WTC11 (cell line): ENCODE measurements at regions of chr17 and their contacts with region 1.

Region 1: DNA sequence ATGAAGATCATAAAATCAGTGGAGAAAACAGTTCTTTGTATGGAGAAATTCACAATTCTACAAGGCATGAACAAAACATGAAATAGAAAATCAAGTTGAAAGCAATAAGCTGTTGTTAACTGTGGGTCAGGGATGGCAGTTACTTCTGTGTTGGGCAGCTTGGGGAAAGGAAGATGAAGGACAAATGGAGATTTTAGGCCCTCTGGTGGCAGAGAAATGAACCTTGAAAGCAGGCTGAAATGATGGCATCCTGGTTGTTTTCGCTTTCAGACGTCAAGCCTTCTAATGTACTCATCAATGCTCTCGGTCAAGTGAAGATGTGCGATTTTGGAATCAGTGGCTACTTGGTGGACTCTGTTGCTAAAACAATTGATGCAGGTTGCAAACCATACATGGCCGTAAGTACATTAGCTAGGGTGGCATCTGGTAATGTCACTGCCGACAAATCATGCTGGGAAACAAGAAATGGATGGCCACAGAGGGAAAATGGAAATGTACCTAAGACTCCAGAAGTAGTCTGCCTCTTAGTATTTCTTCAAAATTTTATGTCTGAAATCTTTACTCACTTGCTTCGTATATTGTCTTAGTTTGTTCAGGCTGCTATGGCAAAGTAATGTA is 108.9 kb downstream of the MAP2K6 start:
- DNase-seq: no peak
- ATAC-seq: peak; percentile 81
- H3K4me3 Mint-ChIP-seq: no peak overlapping the region
- H3K27ac Mint-ChIP-seq: peak overlapping the region; percentile 47
- H3K4me1 Mint-ChIP-seq: peaks cover 7% of the 10 kb centered on the region
- H3K27me3 Mint-ChIP-seq: no peaks in the 10 kb centered on the region
- CTCF ChIP-seq: peak; percentile 48

Region 2: DNA sequence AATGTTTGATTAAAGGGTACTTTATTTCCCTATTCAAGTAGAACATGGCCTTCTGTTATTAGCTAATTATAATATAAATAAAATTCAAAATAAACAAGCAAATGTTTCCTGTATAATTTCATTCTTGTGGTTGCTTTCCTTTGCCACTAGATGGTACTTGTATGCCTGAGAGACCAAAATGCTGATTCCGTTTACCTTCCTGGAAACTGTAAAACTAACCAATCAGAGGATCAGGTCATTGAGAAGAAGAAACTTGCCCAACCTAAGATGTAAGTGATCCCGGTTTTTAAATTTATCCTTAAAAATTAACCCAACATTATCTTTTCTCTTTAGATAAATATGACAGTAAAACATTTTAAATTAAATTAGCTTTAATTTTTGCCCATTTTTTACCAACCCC is 188.3 kb before region 1 on chr17:
- CTCF ChIA-PET with region 1: interaction called, 10 read pairs
- POLR2A ChIA-PET with region 1: no interaction called
- DNase-seq: no peak
- ATAC-seq: peak; percentile 79
- H3K4me3 Mint-ChIP-seq: no peak overlapping the region
- H3K27ac Mint-ChIP-seq: no peak overlapping the region
- H3K4me1 Mint-ChIP-seq: peaks cover 10% of the 10 kb centered on the region
- H3K27me3 Mint-ChIP-seq: no peaks in the 10 kb centered on the region
- CTCF ChIP-seq: no peak

Region 3: DNA sequence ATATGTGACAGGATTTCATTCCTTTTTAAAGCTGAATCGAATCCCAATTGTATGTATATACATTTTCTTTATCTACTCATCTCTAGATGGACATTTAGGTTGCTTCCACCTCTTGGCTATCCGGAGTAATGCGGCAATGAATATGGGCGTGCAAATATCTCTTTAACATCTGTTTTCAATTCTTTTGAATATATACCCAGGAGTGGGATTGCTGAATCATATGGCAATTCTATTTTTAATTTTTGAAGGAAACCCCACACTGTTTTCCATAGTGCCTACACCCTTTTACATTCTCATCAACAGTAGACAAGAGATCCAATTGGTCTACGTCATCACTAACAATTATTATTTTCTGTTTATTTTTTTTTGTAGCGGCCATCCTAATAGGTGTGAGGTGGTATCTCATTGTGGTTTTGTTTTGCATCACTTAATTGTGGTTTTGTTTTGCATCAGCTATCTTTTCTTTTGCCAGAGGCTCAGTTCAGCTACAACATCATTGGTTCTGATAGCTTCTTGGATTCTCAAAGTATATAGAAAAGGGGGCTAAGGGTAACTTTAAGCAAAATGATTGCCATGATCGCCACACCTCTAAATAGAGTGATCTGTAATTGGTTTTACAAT is 134.4 kb before region 1 on chr17:
- CTCF ChIA-PET with region 1: interaction called, 22 read pairs
- POLR2A ChIA-PET with region 1: no interaction called
- DNase-seq: no peak
- ATAC-seq: no peak
- H3K4me3 Mint-ChIP-seq: no peak overlapping the region
- H3K27ac Mint-ChIP-seq: no peak overlapping the region
- H3K4me1 Mint-ChIP-seq: no peaks in the 10 kb centered on the region
- H3K27me3 Mint-ChIP-seq: no peaks in the 10 kb centered on the region
- CTCF ChIP-seq: no peak

Region 4: DNA sequence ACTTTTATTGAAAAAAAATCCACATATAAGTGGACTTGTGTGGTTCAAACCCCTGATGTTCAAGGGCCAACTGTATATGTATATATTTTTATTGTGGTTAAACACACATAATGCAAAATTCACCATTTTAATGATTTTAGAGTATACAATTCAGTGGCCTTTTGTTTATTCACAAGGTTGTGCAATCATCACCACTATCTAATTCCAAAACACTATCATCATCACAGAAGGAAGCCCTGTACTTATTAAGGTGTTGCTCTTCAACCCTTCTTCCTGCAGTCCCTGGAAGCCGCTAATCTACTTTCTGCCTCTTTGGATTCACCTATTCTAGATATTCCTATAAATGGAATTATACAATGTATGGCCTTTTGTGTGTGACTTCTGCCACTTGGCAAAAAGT is 85.9 kb before region 1 on chr17:
- CTCF ChIA-PET with region 1: no interaction called
- POLR2A ChIA-PET with region 1: no interaction called
- DNase-seq: no peak
- ATAC-seq: no peak
- H3K4me3 Mint-ChIP-seq: no peak overlapping the region
- H3K27ac Mint-ChIP-seq: no peak overlapping the region
- H3K4me1 Mint-ChIP-seq: peaks cover 46% of the 10 kb centered on the region
- H3K27me3 Mint-ChIP-seq: no peaks in the 10 kb centered on the region
- CTCF ChIP-seq: no peak

Region 5: GRCh38 chr17:69473841-69474831 is 49.2 kb before region 1 on chr17:
- CTCF ChIA-PET with region 1: no interaction called
- POLR2A ChIA-PET with region 1: no interaction called
- DNase-seq: no peak
- ATAC-seq: no peak
- H3K4me3 Mint-ChIP-seq: no peak overlapping the region
- H3K27ac Mint-ChIP-seq: no peak overlapping the region
- H3K4me1 Mint-ChIP-seq: peaks cover 15% of the 10 kb centered on the region
- H3K27me3 Mint-ChIP-seq: no peaks in the 10 kb centered on the region
- CTCF ChIP-seq: no peak

Region 6: DNA sequence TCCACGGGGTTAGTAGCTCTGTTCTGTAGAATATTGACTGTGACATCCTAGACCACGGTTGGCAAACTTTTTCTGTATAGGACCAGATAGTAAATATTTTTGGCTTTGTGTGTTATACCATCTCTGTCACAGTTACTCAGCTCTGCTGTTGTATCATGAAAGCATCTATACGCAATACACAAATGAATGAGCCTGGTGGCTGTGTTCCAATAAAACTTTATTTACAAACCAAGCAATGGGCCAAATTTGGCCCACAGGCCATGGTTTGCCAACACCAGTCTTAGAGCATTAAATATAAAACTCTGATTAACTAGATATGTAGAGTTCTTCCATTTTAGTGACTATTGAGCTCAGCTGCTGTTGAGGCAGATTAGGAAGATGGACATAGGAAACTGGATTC is 23.9 kb after region 1 on chr17:
- CTCF ChIA-PET with region 1: interaction called, 11 read pairs
- POLR2A ChIA-PET with region 1: no interaction called
- DNase-seq: no peak
- ATAC-seq: no peak
- H3K4me3 Mint-ChIP-seq: no peak overlapping the region
- H3K27ac Mint-ChIP-seq: no peak overlapping the region
- H3K4me1 Mint-ChIP-seq: peaks cover 24% of the 10 kb centered on the region
- H3K27me3 Mint-ChIP-seq: no peaks in the 10 kb centered on the region
- CTCF ChIP-seq: no peak

Region 7: GRCh38 chr17:69560987-69561441 is 37.7 kb after region 1 on chr17:
- CTCF ChIA-PET with region 1: no interaction called
- POLR2A ChIA-PET with region 1: no interaction called
- DNase-seq: no peak
- ATAC-seq: no peak
- H3K4me3 Mint-ChIP-seq: no peak overlapping the region
- H3K27ac Mint-ChIP-seq: no peak overlapping the region
- H3K4me1 Mint-ChIP-seq: no peaks in the 10 kb centered on the region
- H3K27me3 Mint-ChIP-seq: no peaks in the 10 kb centered on the region
- CTCF ChIP-seq: no peak

Region 8: GRCh38 chr17:69607162-69607834 is 83.9 kb after region 1 on chr17:
- CTCF ChIA-PET with region 1: interaction called, 10 read pairs
- POLR2A ChIA-PET with region 1: no interaction called
- DNase-seq: peak; percentile 70
- ATAC-seq: peak; percentile 91
- H3K4me3 Mint-ChIP-seq: no peak overlapping the region
- H3K27ac Mint-ChIP-seq: peak overlapping the region; percentile 96
- H3K4me1 Mint-ChIP-seq: peaks cover 11% of the 10 kb centered on the region
- H3K27me3 Mint-ChIP-seq: no peaks in the 10 kb centered on the region
- CTCF ChIP-seq: peak; percentile 80